GM12878 (cell line): ENCODE measurements at regions of chr9 and their contacts with region 1.

Region 1: DNA sequence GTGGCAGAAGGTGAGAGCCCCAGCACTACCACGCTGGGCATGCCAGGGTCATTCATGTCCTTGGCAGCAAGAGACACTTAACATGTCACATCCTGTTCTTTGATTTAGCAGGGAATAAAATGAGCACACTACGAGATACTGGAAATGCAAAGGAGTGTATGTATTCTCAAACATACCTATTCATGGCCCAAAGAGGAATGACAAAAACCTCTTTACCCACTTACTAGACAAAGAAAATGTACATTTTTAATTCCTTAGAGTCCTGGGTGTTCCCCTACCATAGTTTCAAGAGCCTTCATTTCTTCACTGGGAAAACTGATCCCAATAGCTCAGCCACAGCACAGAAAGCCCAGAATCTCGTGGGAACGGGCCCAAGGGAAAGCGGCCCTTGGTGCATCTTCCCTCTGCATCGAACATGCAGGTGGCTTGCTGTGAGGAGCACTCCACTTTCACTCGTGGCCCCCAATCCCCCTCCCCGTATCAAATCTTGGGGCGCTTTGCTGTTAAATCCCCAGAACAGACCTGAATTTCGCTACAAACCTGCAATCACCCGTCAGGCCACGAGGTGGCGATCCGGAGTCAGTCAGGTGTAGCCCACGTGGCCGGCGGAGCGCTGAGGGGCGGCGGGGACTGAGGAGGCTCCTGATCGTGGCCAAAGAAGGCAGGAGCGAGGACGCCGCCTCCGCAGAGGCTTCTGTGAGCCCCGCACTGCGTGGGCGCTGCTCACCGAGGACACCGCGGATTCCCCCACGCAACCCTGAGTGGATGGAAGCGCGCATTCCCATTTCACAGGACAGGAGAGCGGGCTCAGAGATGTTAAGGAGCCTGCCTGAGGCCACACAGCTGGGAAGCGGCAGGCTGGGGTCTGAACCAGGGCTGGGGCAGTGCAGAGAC is 91.4 kb downstream of the LMX1B start:
- DNase-seq: no peak
- ATAC-seq: peak; percentile 85
- H3K4me3 ChIP-seq: no peak overlapping the region
- H3K27ac ChIP-seq: no peak overlapping the region
- H3K4me1 ChIP-seq: no peaks in the 10 kb centered on the region
- H3K27me3 ChIP-seq: peaks cover 0 to 2% of the 10 kb centered on the region in 2 experiments; a peak in 2 of 4 replicates
- CTCF ChIP-seq: peak; percentile 82 to 91 (median 87)
- EP300 ChIP-seq: no peak
- POLR2A ChIP-seq: no peak
- RAD21 ChIP-seq: peak; percentile 81

Region 2: DNA sequence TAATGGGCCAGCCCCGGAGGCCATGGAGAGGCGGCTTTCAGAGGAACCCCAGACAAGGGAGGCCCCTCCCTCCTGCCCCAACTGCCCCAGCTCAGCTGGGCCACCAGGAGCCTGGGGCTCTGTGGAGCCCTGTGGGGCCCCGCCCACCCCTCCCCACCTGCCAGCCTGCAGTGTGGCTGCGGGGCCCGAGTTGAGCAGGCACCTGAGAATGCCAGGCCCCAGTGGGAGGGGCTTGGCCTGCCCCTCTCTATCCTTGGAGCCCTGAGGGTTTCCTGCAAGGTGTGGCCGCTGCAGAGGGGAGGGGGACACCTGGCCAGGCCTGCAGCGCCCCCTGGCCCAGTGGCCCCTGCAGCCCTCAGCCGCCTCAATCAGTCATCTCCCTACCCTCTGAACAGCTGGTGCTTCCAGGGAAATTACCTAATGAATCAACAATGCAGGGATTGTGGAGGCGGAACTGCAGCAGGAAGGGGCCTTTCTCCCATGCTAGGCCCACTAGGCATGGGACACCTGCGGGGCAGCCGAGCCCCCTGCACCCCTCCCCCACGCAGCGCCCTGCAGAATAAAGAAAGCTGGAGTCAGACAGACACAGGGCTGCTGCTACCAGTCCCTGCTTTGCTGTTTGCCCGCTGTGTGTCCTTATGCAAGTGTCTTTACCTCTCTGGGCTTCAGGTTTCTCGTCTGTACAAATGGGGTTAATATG is 43.4 kb before region 1 on chr9:
- CTCF ChIA-PET with region 1: no interaction called
- POLR2A ChIA-PET with region 1: no interaction called
- RAD21 ChIA-PET with region 1: no interaction called
- SMC1A ChIA-PET with region 1: no interaction called
- in situ Hi-C with region 1: no loop called
- intact Hi-C with region 1: no loop called
- DNase-seq: no peak
- ATAC-seq: no peak
- H3K4me3 ChIP-seq: no peak overlapping the region
- H3K27ac ChIP-seq: no peak overlapping the region
- H3K4me1 ChIP-seq: no peaks in the 10 kb centered on the region; the same call in 1 of the 2 replicates
- H3K27me3 ChIP-seq: peaks cover 0 to 5% of the 10 kb centered on the region in 2 experiments; a peak in 3 of 4 replicates
- CTCF ChIP-seq: no peak
- EP300 ChIP-seq: no peak
- POLR2A ChIP-seq: no peak
- RAD21 ChIP-seq: no peak

Region 3: GRCh38 chr9:126690431-126691350 is 14.4 kb before region 1 on chr9:
- CTCF ChIA-PET with region 1: interaction called, 18 read pairs
- POLR2A ChIA-PET with region 1: no interaction called
- RAD21 ChIA-PET with region 1: interaction called, 3 read pairs
- SMC1A ChIA-PET with region 1: no interaction called
- in situ Hi-C with region 1: no loop called
- intact Hi-C with region 1: no loop called
- DNase-seq: no peak
- ATAC-seq: peak; percentile 92
- H3K4me3 ChIP-seq: no peak overlapping the region
- H3K27ac ChIP-seq: no peak overlapping the region
- H3K4me1 ChIP-seq: no peaks in the 10 kb centered on the region
- H3K27me3 ChIP-seq: peaks cover 0 to 2% of the 10 kb centered on the region in 2 experiments; a peak in 2 of 4 replicates
- CTCF ChIP-seq: peak; percentile 55 to 78 (median 58)
- EP300 ChIP-seq: no peak
- POLR2A ChIP-seq: no peak
- RAD21 ChIP-seq: peak; percentile 27; the same call in 1 of the 2 replicates

Region 4: GRCh38 chr9:126733005-126733404 is 27.9 kb after region 1 on chr9:
- CTCF ChIA-PET with region 1: interaction called, 44 read pairs
- POLR2A ChIA-PET with region 1: no interaction called
- RAD21 ChIA-PET with region 1: no interaction called
- SMC1A ChIA-PET with region 1: interaction called, 3 read pairs
- in situ Hi-C with region 1: no loop called
- intact Hi-C with region 1: no loop called
- DNase-seq: no peak
- ATAC-seq: no peak
- H3K4me3 ChIP-seq: no peak overlapping the region
- H3K27ac ChIP-seq: no peak overlapping the region
- H3K4me1 ChIP-seq: no peaks in the 10 kb centered on the region
- H3K27me3 ChIP-seq: no peaks in the 10 kb centered on the region
- CTCF ChIP-seq: no peak
- EP300 ChIP-seq: no peak
- POLR2A ChIP-seq: no peak
- RAD21 ChIP-seq: no peak

Region 5: GRCh38 chr9:126761274-126761673 is 56.2 kb after region 1 on chr9:
- CTCF ChIA-PET with region 1: interaction called, 11 read pairs
- POLR2A ChIA-PET with region 1: no interaction called
- RAD21 ChIA-PET with region 1: no interaction called
- SMC1A ChIA-PET with region 1: interaction called, 3 read pairs
- in situ Hi-C with region 1: no loop called
- intact Hi-C with region 1: no loop called
- DNase-seq: no peak
- ATAC-seq: no peak
- H3K4me3 ChIP-seq: no peak overlapping the region
- H3K27ac ChIP-seq: no peak overlapping the region
- H3K4me1 ChIP-seq: no peaks in the 10 kb centered on the region
- H3K27me3 ChIP-seq: no peaks in the 10 kb centered on the region; a peak in 1 of 4 replicates
- CTCF ChIP-seq: no peak
- EP300 ChIP-seq: no peak
- POLR2A ChIP-seq: no peak
- RAD21 ChIP-seq: no peak

Region 6: DNA sequence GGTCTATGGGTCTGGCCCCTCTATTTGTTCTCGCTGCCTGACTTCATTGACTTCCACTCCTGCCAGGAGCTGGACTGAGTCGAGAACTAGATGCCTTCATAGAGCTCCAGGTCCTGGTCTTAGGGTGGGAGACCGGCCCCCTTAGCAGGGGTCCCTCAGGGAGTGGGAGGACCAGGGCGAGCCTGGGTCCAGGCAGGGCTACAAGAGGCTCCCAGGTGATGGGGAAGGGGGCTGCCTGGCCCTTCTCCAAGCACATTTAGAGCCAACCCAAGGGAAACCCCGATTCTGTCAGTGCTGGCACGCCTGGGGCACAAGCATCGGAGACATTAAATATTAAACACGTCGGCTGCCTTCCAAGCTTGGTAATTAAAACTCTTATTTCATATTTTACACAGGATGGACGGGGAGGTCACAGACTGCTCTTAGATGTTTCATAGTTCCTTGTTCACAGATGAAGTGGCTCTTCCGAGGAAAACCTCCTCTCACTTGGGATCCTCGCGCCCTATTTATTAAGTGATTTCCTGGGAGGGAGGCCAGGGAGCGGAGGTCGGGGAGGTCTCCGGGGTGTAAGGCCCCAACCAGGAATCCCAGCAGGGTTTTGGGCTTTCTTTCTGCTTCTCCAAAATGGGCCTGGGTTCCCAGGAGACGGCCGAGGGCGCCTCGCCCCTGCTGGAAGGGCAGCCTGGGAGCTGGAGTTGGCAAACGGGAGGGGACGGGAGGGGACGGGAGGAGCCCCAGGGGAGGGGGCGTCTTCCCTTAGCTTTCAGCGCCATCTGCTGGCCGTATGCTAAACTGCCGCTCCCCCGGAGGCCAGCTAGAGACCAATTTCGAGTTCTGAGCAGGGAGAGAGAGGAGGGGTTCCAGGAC is 76.3 kb after region 1 on chr9:
- CTCF ChIA-PET with region 1: interaction called, 445 read pairs
- POLR2A ChIA-PET with region 1: interaction called, 4 read pairs
- RAD21 ChIA-PET with region 1: interaction called, 150 read pairs
- SMC1A ChIA-PET with region 1: interaction called, 111 read pairs
- in situ Hi-C with region 1: loop called (anchors 5 kb)
- intact Hi-C with region 1: loop called (anchors 1 kb)
- DNase-seq: no peak
- ATAC-seq: peak; percentile 99
- H3K4me3 ChIP-seq: no peak overlapping the region
- H3K27ac ChIP-seq: no peak overlapping the region
- H3K4me1 ChIP-seq: no peaks in the 10 kb centered on the region
- H3K27me3 ChIP-seq: no peaks in the 10 kb centered on the region; a peak in 1 of 4 replicates
- CTCF ChIP-seq: peak; percentile 91 to 92 (median 91); a peak in 5 of 6 replicates
- EP300 ChIP-seq: no peak
- POLR2A ChIP-seq: no peak
- RAD21 ChIP-seq: peak; percentile 88

Region 7: GRCh38 chr9:126804696-126805545 is 99.8 kb after region 1 on chr9 and contains the start of gene ZBTB43:
- CTCF ChIA-PET with region 1: interaction called, 10 read pairs
- POLR2A ChIA-PET with region 1: no interaction called
- RAD21 ChIA-PET with region 1: interaction called, 3 read pairs
- SMC1A ChIA-PET with region 1: no interaction called
- in situ Hi-C with region 1: no loop called
- intact Hi-C with region 1: no loop called
- DNase-seq: peak; percentile 89
- ATAC-seq: peak; percentile 92
- H3K4me3 ChIP-seq: peak within 1 kb of the TSS; percentile 82
- H3K27ac ChIP-seq: peak within 1 kb of the TSS; percentile 60
- H3K4me1 ChIP-seq: no peaks in the 10 kb centered on the region; the same call in 1 of the 2 replicates
- H3K27me3 ChIP-seq: no peaks in the 10 kb centered on the region
- CTCF ChIP-seq: no peak
- EP300 ChIP-seq: no peak
- POLR2A ChIP-seq: peak; percentile 98
- RAD21 ChIP-seq: no peak
- polyA plus RNA-seq, gene ZBTB43: 2.4 to 5.3 TPM

Region 8: GRCh38 chr9:127241354-127241753 is 536.2 kb after region 1 on chr9:
- CTCF ChIA-PET with region 1: no interaction called
- POLR2A ChIA-PET with region 1: no interaction called
- RAD21 ChIA-PET with region 1: no interaction called
- SMC1A ChIA-PET with region 1: no interaction called
- in situ Hi-C with region 1: no loop called
- intact Hi-C with region 1: no loop called
- DNase-seq: no peak
- ATAC-seq: no peak
- H3K4me3 ChIP-seq: no peak overlapping the region
- H3K27ac ChIP-seq: no peak overlapping the region
- H3K4me1 ChIP-seq: peaks cover 7% of the 10 kb centered on the region
- H3K27me3 ChIP-seq: no peaks in the 10 kb centered on the region
- CTCF ChIP-seq: no peak
- EP300 ChIP-seq: no peak
- POLR2A ChIP-seq: no peak
- RAD21 ChIP-seq: no peak